Endothelial cell of umbilical vein (primary cell): ENCODE measurements at regions of chr3 and their contacts with region 1.

Region 1: DNA sequence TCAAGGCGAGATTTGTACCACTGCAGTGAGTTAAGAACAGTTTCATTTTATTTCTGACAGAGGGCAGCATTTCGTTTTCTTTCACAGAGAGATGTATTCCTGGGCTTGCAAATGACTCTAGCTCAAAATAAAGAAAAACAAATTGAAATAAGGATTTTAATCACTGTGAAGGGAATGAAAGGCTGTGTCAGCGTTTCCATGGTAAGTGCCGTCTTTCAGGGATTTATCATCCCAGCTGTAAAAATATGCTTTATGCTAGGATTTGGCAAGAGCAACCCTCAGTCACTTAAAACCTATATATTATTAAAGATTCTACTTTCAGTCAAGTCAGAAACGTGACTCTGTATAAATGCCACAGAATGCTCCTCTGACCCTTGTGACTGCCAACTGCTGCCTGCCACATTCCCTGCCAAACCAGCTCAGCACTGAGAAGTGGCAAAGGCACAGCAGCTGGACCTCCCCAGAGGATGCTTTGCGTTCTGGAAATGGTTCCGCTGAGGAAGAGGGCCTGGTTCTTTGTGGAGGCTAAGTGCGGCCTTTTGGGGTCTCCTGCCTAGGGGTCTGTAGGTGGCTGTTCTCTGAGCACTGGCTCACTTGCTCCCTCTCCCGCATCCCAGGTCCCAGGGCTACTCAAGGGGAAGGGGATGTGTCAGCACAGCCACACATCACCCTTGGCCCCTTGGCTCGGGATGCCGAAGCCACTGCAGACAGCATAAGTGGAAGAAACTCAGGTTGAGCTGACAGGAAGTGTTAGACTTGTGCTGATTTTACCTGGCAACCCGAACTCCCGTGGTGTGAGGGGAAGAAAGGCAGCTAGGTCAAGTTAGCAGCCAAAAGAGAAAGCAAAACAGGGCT is 56.6 kb upstream of the POMGNT2 start:
- DNase-seq: peak; percentile 86
- H3K4me3 ChIP-seq: no peak overlapping the region
- H3K27ac ChIP-seq: peak overlapping the region; percentile 65
- H3K4me1 ChIP-seq: peaks cover 12% of the 10 kb centered on the region
- H3K27me3 ChIP-seq: no peaks in the 10 kb centered on the region
- CTCF ChIP-seq: peak; percentile 33 to 36
- POLR2A ChIP-seq: no peak

Region 2: DNA sequence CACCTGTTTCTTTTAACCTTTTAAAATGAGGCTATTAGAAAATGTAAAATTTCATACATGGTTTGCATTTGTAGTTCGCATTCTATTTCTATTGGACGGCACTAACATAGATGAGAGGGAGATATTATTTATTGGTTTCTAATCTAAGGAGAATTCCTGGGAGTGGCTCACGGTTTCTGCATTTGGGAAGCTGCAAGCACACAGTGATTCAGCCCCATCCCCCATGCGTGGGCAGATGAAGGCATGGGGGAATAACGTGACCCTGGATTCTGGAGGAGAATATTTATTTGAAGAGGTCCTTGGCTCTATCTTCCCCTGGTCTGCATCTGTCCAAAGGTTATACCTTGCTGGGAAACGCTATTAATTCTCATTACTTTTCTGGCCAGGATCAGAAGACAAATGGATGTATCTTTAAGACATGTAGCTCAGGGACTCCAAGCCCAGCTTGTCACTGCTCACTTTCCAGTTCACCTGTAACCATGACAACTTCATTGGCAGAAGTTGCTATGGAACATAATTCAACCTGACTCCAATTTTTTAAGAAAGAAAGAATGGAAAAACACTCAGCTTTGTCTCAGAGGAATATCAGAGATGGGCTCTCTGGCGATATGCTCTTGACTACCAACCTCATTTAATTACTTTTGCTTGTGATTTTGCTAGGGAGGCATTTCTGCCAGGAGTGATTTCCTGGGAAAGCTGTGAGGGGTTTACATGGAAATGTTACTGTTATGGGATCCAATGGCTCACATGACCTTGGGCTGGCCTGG is 29.4 kb before region 1 on chr3:
- CTCF ChIA-PET with region 1: no interaction called
- POLR2A ChIA-PET with region 1: no interaction called
- dilution Hi-C with region 1: no loop called
- intact Hi-C with region 1: no loop called
- DNase-seq: no peak
- H3K4me3 ChIP-seq: no peak overlapping the region
- H3K27ac ChIP-seq: no peak overlapping the region
- H3K4me1 ChIP-seq: no peaks in the 10 kb centered on the region
- H3K27me3 ChIP-seq: peaks cover 0 to 2% of the 10 kb centered on the region in 2 experiments
- CTCF ChIP-seq: no peak
- POLR2A ChIP-seq: no peak

Region 3: DNA sequence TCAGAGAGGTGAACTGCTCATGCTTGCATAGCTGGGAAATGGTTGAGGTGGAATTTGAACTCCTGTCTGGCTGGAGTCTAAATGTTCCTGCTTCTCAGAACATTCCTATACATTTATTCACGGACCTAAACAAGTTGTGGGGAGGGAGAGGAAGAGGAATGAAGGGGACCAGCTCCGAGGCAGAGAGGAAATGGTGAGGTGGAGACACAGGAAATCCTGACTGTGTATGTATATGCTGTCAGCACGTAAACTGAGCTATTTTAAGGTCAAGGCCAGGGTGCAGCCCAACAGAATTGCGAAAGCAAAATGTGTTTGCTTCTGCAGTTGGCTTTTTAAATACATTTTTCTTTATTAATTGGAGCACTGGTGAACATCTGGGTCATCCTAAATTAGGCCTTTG is 17.6 kb after region 1 on chr3:
- CTCF ChIA-PET with region 1: interaction called, 41 read pairs
- POLR2A ChIA-PET with region 1: interaction called, 3 read pairs
- dilution Hi-C with region 1: no loop called
- intact Hi-C with region 1: loop called (anchors 1 kb)
- DNase-seq: peak; percentile 96
- H3K4me3 ChIP-seq: no peak overlapping the region
- H3K27ac ChIP-seq: peak overlapping the region; percentile 89
- H3K4me1 ChIP-seq: peaks cover 47% of the 10 kb centered on the region
- H3K27me3 ChIP-seq: no peaks in the 10 kb centered on the region
- CTCF ChIP-seq: no peak
- POLR2A ChIP-seq: no peak

Region 4: GRCh38 chr3:43215663-43216275 is 53.3 kb after region 1 on chr3:
- CTCF ChIA-PET with region 1: interaction called, 13 read pairs
- POLR2A ChIA-PET with region 1: no interaction called
- dilution Hi-C with region 1: no loop called
- intact Hi-C with region 1: no loop called
- DNase-seq: no peak
- H3K4me3 ChIP-seq: no peak overlapping the region
- H3K27ac ChIP-seq: no peak overlapping the region
- H3K4me1 ChIP-seq: peaks cover 4% of the 10 kb centered on the region
- H3K27me3 ChIP-seq: no peaks in the 10 kb centered on the region
- CTCF ChIP-seq: peak in 1 of 2 donors; percentile 4
- POLR2A ChIP-seq: no peak

Region 5: DNA sequence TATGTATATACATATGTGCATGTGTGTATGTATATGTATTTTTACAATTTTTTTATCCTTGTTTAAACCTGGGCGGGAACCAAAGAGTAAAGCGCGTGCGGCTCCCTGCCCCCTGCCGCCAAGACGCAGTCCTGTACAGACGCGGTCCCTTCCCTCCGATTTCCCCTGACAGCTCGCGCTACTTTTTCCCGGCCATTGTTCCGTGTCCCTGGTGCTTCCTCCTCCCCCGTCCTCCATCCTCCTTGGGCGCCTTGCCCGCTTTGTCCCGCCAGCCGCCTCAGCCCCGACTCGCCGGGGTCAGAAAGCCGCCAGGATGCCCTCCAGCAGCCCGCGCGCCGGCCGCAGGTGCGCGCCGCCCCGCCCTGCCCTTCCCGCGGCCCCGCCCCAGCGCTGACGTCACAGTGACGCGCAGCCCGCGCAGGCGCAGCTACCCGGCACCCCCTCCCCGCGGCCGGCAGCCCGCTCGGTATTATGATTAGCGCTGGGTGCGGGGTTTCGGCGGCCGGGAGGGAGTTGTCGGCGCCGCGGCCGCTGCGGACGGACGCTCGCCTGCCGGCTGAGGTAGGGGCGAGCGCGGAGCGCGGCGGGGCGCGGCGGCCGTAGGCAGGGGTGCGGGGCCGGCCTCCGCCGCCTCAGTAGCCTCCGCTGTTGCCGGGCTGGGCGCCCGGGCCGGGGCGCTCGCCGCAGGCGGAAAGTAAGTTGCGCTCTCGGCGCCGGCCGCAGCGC is 123.8 kb after region 1 on chr3 and contains the start of gene SNRK:
- CTCF ChIA-PET with region 1: interaction called, 20 read pairs
- POLR2A ChIA-PET with region 1: interaction called, 3 read pairs
- dilution Hi-C with region 1: no loop called
- intact Hi-C with region 1: loop called (anchors 1 kb)
- DNase-seq: peak; percentile 99
- H3K4me3 ChIP-seq: peak within 1 kb of the TSS; percentile 60 to 100 (median 99)
- H3K27ac ChIP-seq: peak within 1 kb of the TSS; percentile 100
- H3K4me1 ChIP-seq: peaks cover 43% of the 10 kb centered on the region
- H3K27me3 ChIP-seq: no peaks in the 10 kb centered on the region
- CTCF ChIP-seq: peak; percentile 32 to 42
- POLR2A ChIP-seq: peak; percentile 87
- total RNA-seq, gene SNRK: 99.9 and 108 TPM in 2 replicates

Region 6: DNA sequence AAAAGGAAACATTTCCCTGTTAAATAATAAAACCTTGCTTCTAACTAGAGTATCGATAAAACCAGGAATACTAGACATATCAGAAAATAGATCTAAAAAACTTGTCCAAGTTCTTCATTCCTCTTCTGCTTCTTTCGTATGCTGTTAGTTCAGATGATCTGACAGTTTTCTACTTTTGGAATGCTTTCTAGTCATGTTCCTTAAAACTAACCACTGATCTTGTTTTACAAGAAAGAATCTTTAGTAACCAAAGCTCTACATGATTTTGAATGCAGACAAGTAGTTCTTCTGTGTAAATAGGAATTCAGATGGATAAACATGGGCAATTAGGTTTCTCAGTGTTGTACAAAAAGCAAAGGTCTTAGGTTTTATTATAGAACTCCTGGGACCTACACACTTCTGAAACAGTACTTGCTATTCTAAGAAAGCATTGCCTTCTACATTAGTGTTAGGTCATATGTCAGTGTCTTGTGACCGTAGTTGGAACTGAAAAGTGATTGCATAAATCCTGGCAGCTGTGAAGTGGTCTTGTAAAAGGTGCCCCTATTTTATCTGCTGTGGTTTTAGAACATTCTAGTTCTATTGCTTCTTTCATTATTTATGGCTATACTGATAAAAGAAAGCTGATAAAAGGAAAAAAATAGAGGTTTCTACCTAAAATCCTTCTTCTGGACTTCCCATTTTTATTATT is 164.6 kb after region 1 on chr3:
- CTCF ChIA-PET with region 1: interaction called, 4 read pairs
- POLR2A ChIA-PET with region 1: no interaction called
- dilution Hi-C with region 1: no loop called
- intact Hi-C with region 1: loop called (anchors 1 kb)
- DNase-seq: peak; percentile 23
- H3K4me3 ChIP-seq: no peak overlapping the region
- H3K27ac ChIP-seq: no peak overlapping the region
- H3K4me1 ChIP-seq: peaks cover 9% of the 10 kb centered on the region
- H3K27me3 ChIP-seq: no peaks in the 10 kb centered on the region
- CTCF ChIP-seq: no peak
- POLR2A ChIP-seq: no peak

Region 7: GRCh38 chr3:43690400-43691119 is 528.1 kb after region 1 on chr3 and contains the start of gene ABHD5:
- CTCF ChIA-PET with region 1: no interaction called
- POLR2A ChIA-PET with region 1: no interaction called
- dilution Hi-C with region 1: no loop called
- intact Hi-C with region 1: loop called (anchors 2 kb)
- DNase-seq: peak; percentile 97
- H3K4me3 ChIP-seq: peak within 1 kb of the TSS; percentile 62 to 88 (median 87)
- H3K27ac ChIP-seq: peak within 1 kb of the TSS; percentile 76
- H3K4me1 ChIP-seq: peaks cover 12% of the 10 kb centered on the region
- H3K27me3 ChIP-seq: peaks cover 0 to 1% of the 10 kb centered on the region in 2 experiments
- CTCF ChIP-seq: peak; percentile 17 to 55
- POLR2A ChIP-seq: peak; percentile 100
- total RNA-seq, gene ABHD5: 17.1 and 21.2 TPM in 2 replicates